Activated B cell treated with CpG ODN at 0.5 μM for 24 hours (primary cell): ENCODE measurements at regions of chr5 and their contacts with region 1.

Region 1: GRCh38 chr5:67202828-67203227 is 6.2 kb upstream of the CD180 start:
- DNase-seq: no peak
- ATAC-seq: no peak
- H3K4me3 Mint-ChIP-seq: peak overlapping the region; percentile 53
- H3K27ac Mint-ChIP-seq: peak overlapping the region; percentile 96
- H3K4me1 Mint-ChIP-seq: peaks cover 98% of the 10 kb centered on the region
- H3K27me3 Mint-ChIP-seq: no peaks in the 10 kb centered on the region
- CTCF ChIP-seq: no peak

Region 2: DNA sequence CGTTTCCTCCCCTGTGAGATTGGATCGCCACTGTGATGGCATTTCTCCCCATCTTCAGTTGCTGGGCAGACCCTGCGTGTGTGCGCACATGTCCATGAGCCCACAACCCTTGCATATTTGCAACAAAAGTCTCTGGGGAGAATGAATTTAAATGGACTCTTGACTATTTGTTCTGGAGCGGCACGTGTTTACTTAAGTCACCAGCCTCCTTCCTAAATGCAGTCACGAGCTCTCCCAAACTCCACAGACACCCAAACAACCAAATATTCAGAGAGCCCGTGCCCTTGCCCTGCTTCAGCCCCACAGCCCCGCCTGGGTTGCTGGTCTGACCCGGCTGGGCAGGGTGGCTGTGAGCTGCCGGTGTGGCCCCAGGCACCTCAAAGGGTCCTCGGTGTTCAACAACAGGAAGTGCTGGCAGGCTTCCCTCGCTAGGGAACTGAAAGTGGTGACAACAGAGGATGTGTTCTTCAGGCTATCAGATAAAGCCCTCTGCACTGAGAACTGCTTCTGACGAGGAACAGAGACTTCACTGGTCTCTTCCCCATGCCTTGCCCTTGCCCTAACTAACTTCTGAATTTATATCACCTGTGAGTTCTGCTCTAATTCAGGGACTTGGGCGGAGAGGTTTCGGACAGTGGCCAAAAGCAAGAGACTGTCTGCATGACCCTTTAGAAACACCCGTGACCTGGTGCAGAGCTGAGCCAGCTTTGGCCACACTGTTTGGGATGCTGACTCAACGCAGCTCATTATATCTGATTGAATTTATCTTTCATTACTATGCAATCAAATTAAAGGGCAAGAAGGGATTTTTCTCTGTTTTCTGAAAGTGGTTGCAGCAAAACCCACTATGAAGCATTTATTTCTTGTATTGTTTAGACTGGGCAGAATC is 13.0 kb after region 1 on chr5:
- CTCF ChIA-PET with region 1: interaction called, 13 read pairs
- POLR2A ChIA-PET with region 1: interaction called, 28 read pairs
- intact Hi-C with region 1: loop called (anchors 1 kb)
- DNase-seq: peak; percentile 70
- ATAC-seq: peak; percentile 98
- H3K4me3 Mint-ChIP-seq: peak overlapping the region; percentile 76
- H3K27ac Mint-ChIP-seq: peak overlapping the region; percentile 98
- H3K4me1 Mint-ChIP-seq: peaks cover 58% of the 10 kb centered on the region
- H3K27me3 Mint-ChIP-seq: no peaks in the 10 kb centered on the region
- CTCF ChIP-seq: no peak

Region 3: GRCh38 chr5:67221487-67222242 is 18.8 kb after region 1 on chr5:
- CTCF ChIA-PET with region 1: no interaction called
- POLR2A ChIA-PET with region 1: interaction called, 28 read pairs
- intact Hi-C with region 1: loop called (anchors 1 kb)
- DNase-seq: no peak
- ATAC-seq: peak; percentile 75
- H3K4me3 Mint-ChIP-seq: peak overlapping the region; percentile 78
- H3K27ac Mint-ChIP-seq: peak overlapping the region; percentile 97
- H3K4me1 Mint-ChIP-seq: peaks cover 65% of the 10 kb centered on the region
- H3K27me3 Mint-ChIP-seq: no peaks in the 10 kb centered on the region
- CTCF ChIP-seq: no peak